G401 (cell line): ENCODE measurements at regions of chr12 and their contacts with region 1.

Region 1: GRCh38 chr12:53798575-53798974 is 46.8 kb upstream of the CISTR start:
- DNase-seq: no peak

Region 2: GRCh38 chr12:53830621-53831020 is 32.0 kb after region 1 on chr12:
- in situ Hi-C with region 1: loop called (anchors 5 kb)
- DNase-seq: no peak